ENCODE measurements at regions of chr17 and their contacts with region 1.

Region 1: DNA sequence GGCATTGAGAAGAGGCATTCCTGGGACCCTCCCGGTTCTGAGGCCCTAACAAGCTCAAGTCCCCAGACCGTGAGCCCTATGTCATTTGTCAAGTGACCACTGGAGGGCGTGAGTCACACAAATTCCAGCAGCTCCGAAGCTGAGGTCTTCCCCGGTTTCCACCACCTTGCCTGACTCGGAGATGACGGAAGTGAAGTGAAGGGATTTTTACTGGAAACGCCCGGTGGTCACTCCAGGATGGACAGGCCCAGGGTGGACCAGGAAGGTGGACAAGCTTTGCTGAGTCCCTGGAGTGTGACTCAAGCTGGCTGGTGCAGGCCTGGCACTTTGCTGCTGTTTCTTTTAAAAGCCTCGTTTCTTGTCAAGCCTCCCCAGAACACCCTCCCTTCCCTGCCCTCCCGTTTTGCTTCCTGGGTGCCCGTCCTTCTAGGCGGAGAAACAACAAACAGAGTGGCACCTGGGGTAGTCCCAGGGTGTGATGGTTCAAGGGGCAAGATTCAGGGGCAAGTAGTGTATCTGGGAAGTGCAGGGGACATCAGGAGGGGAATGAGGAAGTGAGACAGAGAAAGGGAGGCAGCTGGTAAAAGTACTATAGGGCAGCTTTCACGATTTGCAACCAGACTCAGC is 5.3 kb upstream of the NOS2 start:
- DNase-seq: peak; percentile 80

Region 2: GRCh38 chr17:27782791-27783206 is 22.8 kb before region 1 on chr17:
- CTCF ChIA-PET with region 1: no interaction called
- POLR2A ChIA-PET with region 1: no interaction called
- DNase-seq: no peak

Region 3: DNA sequence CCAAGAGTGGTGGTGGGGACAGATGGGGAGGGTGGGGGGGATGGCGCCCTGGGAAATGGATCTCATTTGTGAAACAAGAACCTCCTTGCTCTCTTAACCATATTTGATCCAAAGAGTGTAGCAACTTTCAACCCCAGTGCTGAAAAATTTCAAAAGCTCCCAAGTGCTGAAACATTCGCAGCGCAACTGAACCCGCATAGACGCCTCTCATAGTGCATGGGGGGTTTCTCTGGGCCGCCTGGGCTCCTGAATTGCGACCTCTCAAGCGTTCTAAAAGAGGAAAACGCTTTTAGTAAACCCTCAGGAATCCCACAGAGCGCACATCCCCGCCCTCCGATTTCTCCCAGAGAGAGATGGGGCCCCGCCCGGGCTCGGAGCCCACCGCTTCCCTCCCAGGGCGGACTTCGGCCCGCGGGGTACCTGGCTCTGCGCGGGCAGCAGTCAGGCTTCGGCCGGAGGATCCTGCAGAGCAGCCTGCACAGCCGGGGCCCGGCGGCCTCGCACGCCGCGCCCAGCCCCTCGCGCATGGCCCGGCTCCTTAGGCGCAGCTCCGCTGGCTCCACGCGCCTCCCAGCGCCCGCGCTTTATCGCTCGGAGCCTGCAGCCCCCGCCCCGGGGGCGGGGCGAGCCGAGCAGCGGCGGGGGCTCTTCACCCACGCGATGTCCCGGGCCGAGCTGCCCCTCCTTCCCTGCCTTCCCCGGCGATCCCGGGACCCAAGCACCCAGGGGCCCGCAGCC is 12.3 kb before region 1 on chr17:
- CTCF ChIA-PET with region 1: interaction called, 10 read pairs
- POLR2A ChIA-PET with region 1: interaction called, 5 read pairs
- DNase-seq: peak; percentile 64

Region 4: GRCh38 chr17:27892866-27893769 is 87.5 kb after region 1 on chr17 and contains the start of gene LYRM9:
- CTCF ChIA-PET with region 1: interaction called, 15 read pairs
- POLR2A ChIA-PET with region 1: interaction called, 3 read pairs
- DNase-seq: peak; percentile 91